Sigmoid colon (tissue), 7 donors: ENCODE measurements at regions of chr22 and their contacts with region 1.

Region 1: DNA sequence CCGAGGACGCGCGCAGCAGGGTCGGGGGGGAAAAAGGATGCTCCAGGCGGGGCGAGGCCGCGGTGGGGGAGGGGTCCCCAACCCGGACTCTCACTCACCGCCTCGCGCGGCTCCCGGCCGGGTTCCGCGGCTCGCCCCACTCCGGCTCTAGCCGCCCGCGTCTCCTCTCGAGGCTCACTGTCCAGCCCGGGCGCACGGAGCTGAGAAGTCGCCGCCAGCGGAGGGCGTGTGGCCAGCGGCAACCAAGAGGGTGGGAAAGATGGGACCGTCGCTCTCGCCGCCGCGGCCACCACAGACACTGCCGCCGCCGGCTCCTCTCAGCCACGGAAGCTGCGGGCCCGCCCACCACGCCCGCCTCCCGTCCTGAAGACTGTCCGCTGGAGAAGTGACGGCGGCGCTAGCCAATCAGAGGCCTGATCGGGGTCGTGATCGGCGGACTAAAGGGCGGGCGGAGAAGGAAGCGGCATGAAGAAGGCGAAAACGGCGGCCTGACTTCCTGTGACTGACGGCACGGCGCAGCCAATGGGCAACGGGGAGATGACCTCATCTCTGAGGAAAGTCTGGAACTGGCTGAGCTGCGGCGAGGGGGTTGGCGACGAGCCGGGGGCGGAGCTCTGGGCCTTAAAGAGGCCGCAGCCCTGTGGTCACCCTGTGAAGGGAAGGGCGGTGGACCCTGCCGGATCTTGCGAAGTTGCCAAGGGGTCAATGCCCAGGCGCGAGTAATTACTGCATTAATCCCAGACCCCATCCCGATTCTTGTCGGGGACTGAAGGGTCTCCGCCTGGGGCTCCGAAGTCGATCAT is at the start of gene MRTFA:
- DNase-seq: peak; percentile 100
- H3K4me3 ChIP-seq: peak within 1 kb of the TSS; percentile 86 to 95 (median 90)
- H3K27ac ChIP-seq: peak within 1 kb of the TSS; percentile 85 to 95 (median 92)
- H3K4me1 ChIP-seq: peaks cover 0 to 43% (median 33%) of the 10 kb centered on the region in 4 donors
- H3K27me3 ChIP-seq: no peaks in the 10 kb centered on the region
- CTCF ChIP-seq: no peak
- EP300 ChIP-seq: peak in 1 of 4 donors; percentile 33
- POLR2A ChIP-seq: peak; percentile 94 to 96
- total RNA-seq, gene MRTFA: 19.6 to 104 (median 72.1) TPM

Region 2: DNA sequence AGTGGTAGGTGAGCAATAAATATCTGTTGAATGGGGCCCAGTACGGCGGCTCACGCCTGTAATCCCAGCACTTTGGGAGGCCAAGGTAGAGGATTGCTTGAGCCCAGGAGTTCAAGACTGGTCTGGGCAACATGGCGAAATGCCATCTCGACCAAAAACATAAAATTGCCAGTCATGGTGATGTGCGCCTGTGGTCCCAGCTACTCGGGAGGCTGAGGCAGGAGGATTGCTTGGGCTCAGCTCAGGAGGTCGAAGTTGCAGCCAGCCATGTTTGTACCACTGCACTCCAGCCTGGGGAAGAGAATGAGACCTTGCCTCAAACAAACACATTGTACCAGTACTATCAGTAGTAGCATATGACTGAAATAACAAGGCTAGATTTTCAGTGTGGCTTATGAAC is 262.0 kb before region 1 on chr22:
- intact Hi-C with region 1: loop called (anchors 5 kb)
- DNase-seq: no peak
- H3K4me3 ChIP-seq: no peak overlapping the region
- H3K27ac ChIP-seq: no peak overlapping the region
- H3K4me1 ChIP-seq: peaks cover 0 to 29% (median 14%) of the 10 kb centered on the region in 4 donors
- H3K27me3 ChIP-seq: no peaks in the 10 kb centered on the region
- CTCF ChIP-seq: no peak
- EP300 ChIP-seq: no peak
- POLR2A ChIP-seq: no peak

Region 3: DNA sequence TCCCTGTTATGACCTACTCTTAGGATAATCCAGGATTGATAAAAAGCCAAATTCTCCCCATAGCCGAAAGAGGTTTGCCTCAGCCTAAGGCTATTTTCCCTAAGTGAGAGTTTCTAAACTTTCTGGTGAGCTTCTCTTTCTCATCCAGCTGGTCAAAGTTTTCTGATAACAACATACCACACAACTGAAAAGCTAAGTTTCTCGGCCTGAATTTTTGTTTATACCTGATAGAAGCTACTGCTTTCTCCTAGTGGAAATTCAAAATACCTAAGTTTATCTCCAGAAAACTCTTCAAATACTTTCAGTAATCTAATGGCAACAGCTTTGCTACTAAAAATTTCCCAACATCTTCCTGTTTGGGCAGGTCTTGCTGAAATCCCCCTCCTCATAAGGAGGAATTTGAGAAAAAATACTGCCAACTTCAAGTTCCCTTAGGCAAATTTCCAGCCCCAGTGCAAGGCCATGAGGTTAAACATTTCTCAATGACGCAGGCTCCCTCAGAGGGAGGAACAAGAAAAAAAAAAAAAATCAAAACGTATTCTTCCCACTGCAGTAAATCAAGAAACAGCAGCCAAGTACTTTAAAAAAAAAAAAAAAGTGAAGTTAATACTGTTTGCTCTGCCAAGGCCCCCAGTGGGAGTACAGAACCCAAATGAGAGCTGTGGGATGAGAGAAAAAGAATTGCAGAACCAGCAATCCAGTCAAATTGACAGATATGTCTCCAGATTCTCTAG is 127.0 kb before region 1 on chr22:
- intact Hi-C with region 1: loop called (anchors 5 kb)
- DNase-seq: peak; percentile 86
- H3K4me3 ChIP-seq: no peak overlapping the region
- H3K27ac ChIP-seq: peak overlapping the region; percentile 68 to 87 (median 80)
- H3K4me1 ChIP-seq: peaks cover 0 to 85% (median 60%) of the 10 kb centered on the region in 4 donors
- H3K27me3 ChIP-seq: no peaks in the 10 kb centered on the region
- CTCF ChIP-seq: no peak
- EP300 ChIP-seq: peak in 1 of 4 donors; percentile 55
- POLR2A ChIP-seq: no peak

Region 4: GRCh38 chr22:40533712-40534378 is 102.7 kb before region 1 on chr22:
- intact Hi-C with region 1: loop called (anchors 5 kb)
- DNase-seq: no peak
- H3K4me3 ChIP-seq: peak overlapping the region in 2 of 4 donors; percentile 1 to 24
- H3K27ac ChIP-seq: peak overlapping the region in 3 of 4 donors; percentile 33 to 62 (median 46)
- H3K4me1 ChIP-seq: peaks cover 0 to 55% (median 52%) of the 10 kb centered on the region in 4 donors
- H3K27me3 ChIP-seq: no peaks in the 10 kb centered on the region
- CTCF ChIP-seq: no peak
- EP300 ChIP-seq: no peak
- POLR2A ChIP-seq: no peak

Region 5: GRCh38 chr22:41816181-41816621 is 1179.6 kb after region 1 on chr22:
- intact Hi-C with region 1: no loop called
- DNase-seq: no peak
- H3K4me3 ChIP-seq: no peak overlapping the region
- H3K27ac ChIP-seq: no peak overlapping the region
- H3K4me1 ChIP-seq: no peaks in the 10 kb centered on the region
- H3K27me3 ChIP-seq: no peaks in the 10 kb centered on the region
- CTCF ChIP-seq: no peak
- EP300 ChIP-seq: no peak
- POLR2A ChIP-seq: no peak